Caco-2 (cell line): ENCODE measurements at regions of chr6 and their contacts with region 1.

Region 1: DNA sequence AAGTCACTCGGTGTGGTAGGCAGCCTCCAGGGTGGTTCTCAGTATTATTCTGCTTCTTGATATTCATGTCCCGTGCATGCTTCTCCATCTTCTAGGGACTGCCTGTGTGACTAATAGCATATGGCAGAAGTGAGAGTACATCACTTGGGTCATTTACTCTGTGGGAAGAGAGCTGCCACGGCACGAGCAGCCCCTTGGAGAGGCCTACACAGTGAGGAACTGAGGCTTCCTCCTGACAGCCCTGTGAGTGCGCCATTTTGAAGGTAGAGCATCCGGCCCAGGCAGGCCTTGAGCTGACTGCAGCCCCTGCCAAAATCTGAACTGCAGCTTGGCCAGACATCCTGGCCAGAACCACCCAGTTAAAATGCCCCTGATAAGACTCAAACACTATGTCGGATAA is 17.3 kb upstream of the MCUR1 start:
- DNase-seq: no peak
- H3K4me3 ChIP-seq: no peak overlapping the region
- H3K4me3 Mint-ChIP-seq: no peak overlapping the region
- H3K27ac Mint-ChIP-seq: no peak overlapping the region
- H3K4me1 ChIP-seq: peaks cover 36% of the 10 kb centered on the region
- H3K4me1 Mint-ChIP-seq: peaks cover 26% of the 10 kb centered on the region
- H3K27me3 ChIP-seq: no peaks in the 10 kb centered on the region
- H3K27me3 Mint-ChIP-seq: no peaks in the 10 kb centered on the region
- CTCF ChIP-seq: no peak

Region 2: GRCh38 chr6:13863674-13864155 is 32.1 kb after region 1 on chr6:
- CTCF ChIA-PET with region 1: no interaction called
- POLR2A ChIA-PET with region 1: no interaction called
- intact Hi-C with region 1: loop called (anchors 1 kb)
- DNase-seq: peak; percentile 95 to 96
- H3K4me3 ChIP-seq: no peak overlapping the region
- H3K4me3 Mint-ChIP-seq: peak overlapping the region; percentile 8
- H3K27ac Mint-ChIP-seq: peak overlapping the region; percentile 29
- H3K4me1 ChIP-seq: peaks cover 30% of the 10 kb centered on the region
- H3K4me1 Mint-ChIP-seq: peaks cover 16% of the 10 kb centered on the region
- H3K27me3 ChIP-seq: no peaks in the 10 kb centered on the region
- H3K27me3 Mint-ChIP-seq: no peaks in the 10 kb centered on the region
- CTCF ChIP-seq: no peak

Region 3: GRCh38 chr6:13873285-13874190 is 41.9 kb after region 1 on chr6:
- CTCF ChIA-PET with region 1: no interaction called
- POLR2A ChIA-PET with region 1: no interaction called
- intact Hi-C with region 1: loop called (anchors 1 kb)
- DNase-seq: peak; percentile 94 to 96
- H3K4me3 ChIP-seq: peak overlapping the region; percentile 53
- H3K4me3 Mint-ChIP-seq: peak overlapping the region; percentile 75
- H3K27ac Mint-ChIP-seq: peak overlapping the region; percentile 99
- H3K4me1 ChIP-seq: peaks cover 17% of the 10 kb centered on the region
- H3K4me1 Mint-ChIP-seq: peaks cover 14% of the 10 kb centered on the region
- H3K27me3 ChIP-seq: no peaks in the 10 kb centered on the region
- H3K27me3 Mint-ChIP-seq: no peaks in the 10 kb centered on the region
- CTCF ChIP-seq: peak; percentile 84 to 98